Dorsolateral prefrontal cortex (tissue), 120 donors: ENCODE measurements at regions of chr19 and their contacts with region 1.

Region 1: DNA sequence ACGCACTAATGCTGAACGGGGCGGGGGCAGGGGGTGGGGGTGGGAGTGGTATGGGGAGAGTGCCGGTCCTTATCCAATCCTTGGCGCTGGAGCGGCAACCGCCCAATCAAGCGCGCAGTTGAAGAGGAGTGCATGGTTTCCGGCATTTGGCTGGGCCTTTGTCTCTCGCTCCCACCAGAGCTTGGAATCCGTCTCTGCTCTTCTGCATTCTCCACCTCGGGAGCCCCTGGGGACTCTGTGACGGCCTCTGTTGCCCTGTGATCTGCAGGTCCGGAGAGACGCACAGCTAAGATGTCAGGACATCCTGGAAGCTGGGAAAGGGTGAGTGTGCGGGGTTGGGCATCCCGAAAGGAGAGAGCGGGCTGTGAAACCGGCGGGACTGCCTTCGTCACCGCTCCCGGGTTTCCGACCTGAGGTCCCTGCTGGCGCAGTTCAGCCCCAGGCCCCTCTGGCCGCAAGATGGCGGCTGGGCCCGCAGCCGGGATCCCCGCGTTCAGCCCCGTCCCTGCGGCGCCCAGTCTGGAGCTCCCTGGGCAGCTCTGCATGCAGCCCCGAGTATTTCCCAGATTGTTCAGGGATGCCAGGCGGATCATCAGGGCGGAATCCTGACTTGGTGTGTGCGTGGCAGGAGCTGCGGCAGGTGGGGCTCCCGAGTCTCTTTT is 53.6 kb upstream of the ZNF254 start:
- DNase-seq: peak; percentile 78 to 93 (median 90)
- H3K4me3 ChIP-seq: peak overlapping the region; percentile 49 to 98 (median 88)
- H3K27ac ChIP-seq: peak overlapping the region; percentile 64 to 97 (median 93)
- H3K27me3 ChIP-seq: no peaks in the 10 kb centered on the region
- CTCF ChIP-seq: peak in 20 of 56 donors; percentile 5 to 46 (median 22)

Region 2: GRCh38 chr19:23810496-23810895 is 222.9 kb before region 1 on chr19:
- intact Hi-C with region 1: no loop called
- DNase-seq: no peak
- H3K4me3 ChIP-seq: no peak overlapping the region
- H3K27ac ChIP-seq: no peak overlapping the region
- H3K27me3 ChIP-seq: no peaks in the 10 kb centered on the region
- CTCF ChIP-seq: no peak

Region 3: DNA sequence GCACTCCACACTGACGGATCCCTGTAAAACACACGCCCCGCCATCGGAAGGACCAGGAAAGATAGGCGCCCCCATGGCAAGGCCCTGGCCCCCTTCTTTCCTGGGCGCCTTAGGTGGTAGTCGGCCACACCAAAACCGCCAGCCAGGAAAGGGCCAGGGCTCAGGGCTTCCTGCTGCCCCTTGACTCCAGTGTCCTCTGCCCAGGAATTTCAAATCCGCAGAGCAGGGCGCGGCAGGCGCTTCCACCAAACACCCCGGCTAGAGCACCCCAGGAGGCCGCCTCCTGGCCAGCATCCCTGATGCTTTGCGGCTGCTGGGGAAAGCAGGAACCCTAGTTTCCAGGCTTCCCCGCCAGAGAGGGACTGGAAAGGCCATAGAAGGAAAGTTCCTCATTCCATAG is 61.3 kb before region 1 on chr19:
- intact Hi-C with region 1: no loop called
- DNase-seq: no peak
- H3K4me3 ChIP-seq: peak overlapping the region in 5 of 59 donors; percentile 5 to 50 (median 36)
- H3K27ac ChIP-seq: no peak overlapping the region
- H3K27me3 ChIP-seq: peaks cover 0 to 54% (median 31%) of the 10 kb centered on the region in 45 donors
- CTCF ChIP-seq: no peak

Region 4: DNA sequence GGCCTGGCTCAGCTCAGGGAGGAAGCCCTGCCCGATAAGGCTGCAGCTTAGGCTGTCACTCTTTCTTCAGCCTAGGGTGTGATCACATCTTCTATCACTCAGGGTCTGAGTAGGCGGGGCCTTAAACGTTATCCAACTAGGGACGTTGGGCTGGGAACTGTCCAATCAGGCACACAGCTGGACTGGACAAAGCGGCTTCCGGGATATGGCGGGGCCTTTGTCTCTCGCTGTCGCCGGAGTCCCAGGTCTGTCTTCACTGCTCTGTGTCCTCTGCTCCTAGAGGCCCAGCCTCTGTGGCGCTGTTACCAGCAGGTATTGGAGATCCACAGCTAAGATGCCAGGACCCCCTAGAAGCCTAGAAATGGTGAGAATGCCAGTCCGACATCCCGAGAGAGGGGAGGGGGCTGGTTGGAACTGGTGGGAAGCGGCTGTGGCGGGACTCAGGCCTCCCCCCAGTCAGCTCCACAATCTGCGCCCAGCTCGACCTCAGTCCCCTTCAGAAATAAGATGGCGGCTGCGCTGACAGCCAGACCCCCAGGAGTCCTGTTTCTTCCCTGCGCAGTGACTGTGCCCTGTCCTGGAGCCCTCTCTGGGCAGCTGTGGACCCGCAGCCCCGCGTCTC is 53.7 kb after region 1 on chr19 and contains the start of gene ZNF254:
- intact Hi-C with region 1: loop called in 1 of 2 experiments (anchors 5 kb)
- DNase-seq: peak; percentile 65 to 97 (median 93)
- H3K4me3 ChIP-seq: peak within 1 kb of the TSS; percentile 47 to 95 (median 81)
- H3K27ac ChIP-seq: peak within 1 kb of the TSS; percentile 63 to 96 (median 86)
- H3K27me3 ChIP-seq: no peaks in the 10 kb centered on the region
- CTCF ChIP-seq: peak in 8 of 56 donors; percentile 7 to 25 (median 16)
- total RNA-seq, gene ZNF254: 19.9 to 40.9 (median 31.2) TPM